Caco-2 (cell line): ENCODE measurements at regions of chr17 and their contacts with region 1.

Region 1: GRCh38 chr17:72618001-72618509 is 474.4 kb downstream of the SLC39A11 start:
- DNase-seq: peak; percentile 90 to 97
- H3K4me3 ChIP-seq: peak overlapping the region; percentile 26
- H3K4me3 Mint-ChIP-seq: peak overlapping the region; percentile 78
- H3K27ac Mint-ChIP-seq: peak overlapping the region; percentile 65
- H3K4me1 ChIP-seq: peaks cover 48% of the 10 kb centered on the region
- H3K4me1 Mint-ChIP-seq: peaks cover 53% of the 10 kb centered on the region
- H3K27me3 ChIP-seq: no peaks in the 10 kb centered on the region
- H3K27me3 Mint-ChIP-seq: no peaks in the 10 kb centered on the region
- CTCF ChIP-seq: no peak

Region 2: DNA sequence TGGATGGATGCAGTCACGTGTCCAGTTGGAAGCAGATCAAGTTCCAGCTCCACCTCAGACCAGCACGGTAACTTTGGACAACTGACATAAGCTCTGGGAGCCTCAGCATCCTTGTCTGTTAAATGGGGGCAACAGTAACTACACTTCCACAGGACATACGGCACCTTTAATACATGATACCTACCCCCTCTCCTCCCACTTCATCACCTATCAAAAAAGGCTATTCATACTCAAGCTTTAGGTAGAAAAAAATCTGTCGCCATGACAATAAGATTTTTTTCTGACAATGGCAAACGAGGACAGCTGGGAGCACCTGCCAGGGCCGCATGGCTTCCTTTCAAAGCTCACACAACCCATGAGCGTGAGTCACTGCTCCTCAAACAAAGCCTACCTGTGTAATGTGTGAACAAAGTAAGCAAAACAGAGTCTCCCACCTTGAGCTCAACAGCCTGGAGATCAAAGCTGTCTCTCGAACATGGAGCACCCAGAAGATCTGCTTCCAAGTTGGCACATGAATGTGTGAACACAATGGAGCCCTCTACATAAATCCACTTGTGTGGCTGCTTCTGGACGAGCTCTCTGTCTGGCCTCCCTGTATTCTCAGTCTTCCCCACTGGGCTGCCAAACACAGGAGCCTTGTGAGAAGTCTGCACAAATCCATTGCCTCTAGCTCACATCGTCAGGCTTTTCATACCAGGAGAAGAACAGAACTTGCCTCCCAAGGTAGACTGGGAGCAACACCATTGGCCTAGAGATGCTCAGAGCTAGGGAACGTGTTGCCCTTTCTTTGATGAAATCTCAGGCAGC is 37.5 kb before region 1 on chr17:
- CTCF ChIA-PET with region 1: interaction called, 4 read pairs
- POLR2A ChIA-PET with region 1: interaction called, 5 read pairs
- intact Hi-C with region 1: loop called (anchors 1 kb)
- DNase-seq: peak; percentile 78 to 86
- H3K4me3 ChIP-seq: no peak overlapping the region
- H3K4me3 Mint-ChIP-seq: peak overlapping the region; percentile 7
- H3K27ac Mint-ChIP-seq: peak overlapping the region; percentile 90
- H3K4me1 ChIP-seq: peaks cover 29% of the 10 kb centered on the region
- H3K4me1 Mint-ChIP-seq: peaks cover 36% of the 10 kb centered on the region
- H3K27me3 ChIP-seq: no peaks in the 10 kb centered on the region
- H3K27me3 Mint-ChIP-seq: no peaks in the 10 kb centered on the region
- CTCF ChIP-seq: no peak

Region 3: DNA sequence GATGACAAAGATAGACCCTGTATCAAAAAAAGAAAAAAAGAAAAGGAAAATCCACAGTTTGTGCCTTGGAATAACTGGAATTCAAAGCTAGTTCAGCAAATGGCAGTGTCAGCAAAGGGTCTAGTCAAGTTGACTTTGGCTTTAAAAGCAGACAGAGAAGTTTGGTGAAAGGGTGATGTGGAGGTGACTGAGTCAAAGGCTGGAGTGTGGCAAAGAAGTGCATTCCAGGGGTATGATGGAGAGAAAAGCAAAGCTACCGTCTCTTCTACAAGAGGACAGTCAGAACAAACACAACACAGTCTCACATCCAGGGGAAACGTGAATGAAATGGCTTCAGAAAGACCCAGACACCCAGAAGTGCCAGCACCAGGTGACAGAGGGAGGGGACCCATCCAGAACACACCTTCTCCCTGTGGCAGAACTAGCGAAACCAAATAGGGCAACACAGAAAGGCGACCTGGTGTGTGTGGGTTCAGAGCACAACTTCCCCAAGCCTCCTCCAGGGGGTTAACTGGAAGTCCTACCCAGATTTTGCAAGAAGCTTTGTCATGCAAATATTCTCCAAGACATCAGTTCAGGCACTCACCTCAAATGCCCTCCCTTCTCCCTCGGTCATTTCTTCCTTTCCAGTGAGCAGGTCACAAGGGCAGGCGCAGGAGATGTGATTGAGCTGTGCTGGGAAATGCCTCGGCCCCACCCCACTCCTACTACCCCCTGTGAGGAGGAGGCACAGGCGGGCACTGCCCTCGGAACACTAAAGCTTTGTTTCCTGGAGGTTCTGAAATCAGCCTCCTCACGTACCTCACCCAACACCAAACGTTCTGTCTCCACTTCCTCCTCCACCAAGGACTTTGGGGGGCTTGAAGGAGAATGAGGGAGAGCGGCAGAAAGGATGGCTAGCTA is 15.3 kb before region 1 on chr17:
- CTCF ChIA-PET with region 1: interaction called, 4 read pairs
- POLR2A ChIA-PET with region 1: interaction called, 3 read pairs
- intact Hi-C with region 1: loop called (anchors 1 kb)
- DNase-seq: peak in 1 of 2 experiments; percentile 53
- H3K4me3 ChIP-seq: no peak overlapping the region
- H3K4me3 Mint-ChIP-seq: no peak overlapping the region
- H3K27ac Mint-ChIP-seq: no peak overlapping the region
- H3K4me1 ChIP-seq: peaks cover 11% of the 10 kb centered on the region
- H3K4me1 Mint-ChIP-seq: peaks cover 16% of the 10 kb centered on the region
- H3K27me3 ChIP-seq: no peaks in the 10 kb centered on the region
- H3K27me3 Mint-ChIP-seq: no peaks in the 10 kb centered on the region
- CTCF ChIP-seq: peak in 1 of 2 experiments; percentile 38

Region 4: DNA sequence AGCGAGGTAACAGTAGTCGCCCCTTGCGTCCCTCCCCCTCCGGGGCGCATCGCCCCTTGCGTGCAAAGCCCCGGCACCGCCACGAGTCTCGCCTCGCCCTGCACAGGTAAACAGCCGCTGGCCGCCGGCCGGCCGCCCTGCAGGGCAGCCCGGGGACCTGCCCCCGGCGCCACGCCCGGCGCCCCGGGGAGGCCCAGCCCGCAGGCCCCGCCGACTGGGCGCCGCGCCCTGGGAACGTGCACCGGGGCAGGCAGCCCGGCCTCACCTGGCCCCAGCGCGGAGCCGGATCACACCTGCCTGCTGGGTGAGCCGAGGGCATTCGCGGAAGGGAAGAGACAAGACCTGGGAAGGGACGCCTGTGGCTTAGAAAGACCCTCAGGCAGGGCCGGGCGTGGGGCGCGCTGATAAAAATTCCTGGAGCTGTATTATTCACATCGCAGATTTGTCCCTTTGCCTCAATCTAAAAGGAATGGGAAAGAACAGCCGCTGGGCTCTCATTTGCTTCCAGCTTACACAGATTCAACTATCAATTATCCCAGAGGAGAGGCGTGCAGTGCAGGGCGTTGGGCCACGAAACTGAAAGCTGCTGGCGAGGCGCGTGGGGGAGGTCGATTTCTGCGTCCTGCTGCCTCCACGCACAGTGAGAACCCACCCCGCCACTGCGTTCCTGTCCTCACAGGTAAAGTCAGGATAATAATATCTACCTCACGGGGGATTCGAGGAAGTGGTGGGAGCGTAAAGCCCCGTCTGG is 22.5 kb after region 1 on chr17:
- CTCF ChIA-PET with region 1: no interaction called
- POLR2A ChIA-PET with region 1: interaction called, 4 read pairs
- intact Hi-C with region 1: loop called (anchors 1 kb)
- DNase-seq: peak; percentile 69 to 76
- H3K4me3 ChIP-seq: peak overlapping the region; percentile 30
- H3K4me3 Mint-ChIP-seq: peak overlapping the region; percentile 72
- H3K27ac Mint-ChIP-seq: peak overlapping the region; percentile 72
- H3K4me1 ChIP-seq: peaks cover 17% of the 10 kb centered on the region
- H3K4me1 Mint-ChIP-seq: no peaks in the 10 kb centered on the region
- H3K27me3 ChIP-seq: no peaks in the 10 kb centered on the region
- H3K27me3 Mint-ChIP-seq: no peaks in the 10 kb centered on the region
- CTCF ChIP-seq: no peak

Region 5: DNA sequence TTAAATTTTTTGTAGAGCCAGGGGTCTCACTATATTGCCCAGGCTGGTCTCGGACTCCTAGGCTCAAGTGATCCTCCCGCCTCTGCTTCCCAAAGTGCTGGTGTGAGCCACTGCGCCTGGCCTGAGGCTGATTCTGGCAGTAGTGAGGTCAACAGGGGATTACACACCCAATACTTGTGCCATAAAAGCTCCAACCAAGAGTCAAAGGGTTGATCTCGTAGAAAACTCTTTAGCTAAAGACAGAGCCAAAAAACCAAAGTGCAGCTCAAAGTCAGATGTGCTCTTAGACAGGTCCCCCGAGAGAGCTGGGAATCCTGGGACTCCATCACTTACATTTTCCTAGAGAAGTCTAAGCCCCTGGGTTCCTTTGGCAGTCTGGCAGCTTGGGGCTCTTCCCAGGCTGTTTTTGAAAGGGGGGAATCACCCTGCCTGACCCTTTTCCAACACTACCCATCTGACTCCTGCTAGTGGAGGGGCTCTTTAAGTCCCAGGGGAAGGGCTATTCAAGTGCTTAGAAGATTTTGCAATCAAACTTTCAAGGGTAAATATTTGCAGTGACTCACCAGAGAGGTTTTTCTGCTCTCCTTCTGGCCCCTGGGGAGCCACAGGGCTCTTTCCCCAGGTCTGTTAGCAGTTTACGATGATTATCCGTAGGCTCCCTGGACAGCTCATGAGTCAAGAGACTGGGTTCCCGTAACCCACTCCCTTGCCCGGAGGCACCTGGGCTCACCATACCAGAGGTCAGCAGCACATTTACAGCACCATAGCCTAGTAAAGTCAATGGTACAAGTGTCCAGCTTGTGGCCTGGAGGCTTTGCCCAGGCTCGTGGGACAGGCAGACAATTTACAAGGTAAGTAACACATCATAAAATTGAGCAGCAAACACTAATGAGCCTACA is 65.7 kb after region 1 on chr17:
- CTCF ChIA-PET with region 1: interaction called, 6 read pairs
- POLR2A ChIA-PET with region 1: no interaction called
- intact Hi-C with region 1: loop called (anchors 1 kb)
- DNase-seq: peak; percentile 81 to 90
- H3K4me3 ChIP-seq: no peak overlapping the region
- H3K4me3 Mint-ChIP-seq: peak overlapping the region; percentile 60
- H3K27ac Mint-ChIP-seq: peak overlapping the region; percentile 88
- H3K4me1 ChIP-seq: peaks cover 49% of the 10 kb centered on the region
- H3K4me1 Mint-ChIP-seq: peaks cover 42% of the 10 kb centered on the region
- H3K27me3 ChIP-seq: no peaks in the 10 kb centered on the region
- H3K27me3 Mint-ChIP-seq: no peaks in the 10 kb centered on the region
- CTCF ChIP-seq: no peak